ENCODE measurements at regions of chr18 and their contacts with region 1.

Region 1: DNA sequence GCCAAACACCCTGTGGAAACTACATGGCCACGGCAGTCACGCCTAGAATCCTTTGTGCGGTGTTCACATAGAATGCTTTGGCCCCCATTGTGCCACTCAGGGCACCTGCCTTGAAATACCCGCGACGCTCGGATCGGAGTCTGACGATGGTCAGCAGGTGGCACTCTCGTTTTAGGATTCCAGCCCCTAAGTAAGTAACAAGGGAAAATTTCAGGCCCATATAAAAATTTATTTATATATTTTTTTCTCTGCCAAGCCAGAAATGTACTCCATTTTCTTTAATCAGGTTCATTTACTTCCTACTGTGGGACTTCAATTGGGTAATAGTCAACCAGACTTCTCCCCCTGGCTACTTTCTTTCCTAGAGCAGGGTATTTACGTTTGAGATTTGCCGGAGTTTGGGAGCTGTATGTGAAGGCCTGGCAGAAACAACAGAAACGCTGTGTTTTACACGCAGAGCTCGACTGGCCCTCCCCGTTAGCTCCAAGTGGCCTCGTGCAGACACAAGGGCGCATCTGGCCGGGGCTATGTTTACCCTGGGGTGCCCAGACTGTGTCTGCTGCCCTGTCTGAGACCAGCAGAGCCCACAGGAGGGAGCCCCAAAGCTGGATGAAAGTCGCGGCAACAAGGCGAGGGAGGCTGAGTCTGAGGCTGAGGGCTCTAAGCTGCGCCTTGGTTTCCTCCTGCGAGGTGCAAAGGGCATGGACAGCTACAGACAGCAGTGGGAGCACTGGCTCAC is 41.6 kb downstream of the LRRC30 start:
- DNase-seq: peak; percentile 68
- H3K4me3 Mint-ChIP-seq: peak overlapping the region; percentile 55
- H3K27ac Mint-ChIP-seq: no peak overlapping the region
- H3K4me1 Mint-ChIP-seq: peaks cover 17% of the 10 kb centered on the region
- H3K27me3 Mint-ChIP-seq: no peaks in the 10 kb centered on the region
- CTCF ChIP-seq: peak; percentile 66

Region 2: DNA sequence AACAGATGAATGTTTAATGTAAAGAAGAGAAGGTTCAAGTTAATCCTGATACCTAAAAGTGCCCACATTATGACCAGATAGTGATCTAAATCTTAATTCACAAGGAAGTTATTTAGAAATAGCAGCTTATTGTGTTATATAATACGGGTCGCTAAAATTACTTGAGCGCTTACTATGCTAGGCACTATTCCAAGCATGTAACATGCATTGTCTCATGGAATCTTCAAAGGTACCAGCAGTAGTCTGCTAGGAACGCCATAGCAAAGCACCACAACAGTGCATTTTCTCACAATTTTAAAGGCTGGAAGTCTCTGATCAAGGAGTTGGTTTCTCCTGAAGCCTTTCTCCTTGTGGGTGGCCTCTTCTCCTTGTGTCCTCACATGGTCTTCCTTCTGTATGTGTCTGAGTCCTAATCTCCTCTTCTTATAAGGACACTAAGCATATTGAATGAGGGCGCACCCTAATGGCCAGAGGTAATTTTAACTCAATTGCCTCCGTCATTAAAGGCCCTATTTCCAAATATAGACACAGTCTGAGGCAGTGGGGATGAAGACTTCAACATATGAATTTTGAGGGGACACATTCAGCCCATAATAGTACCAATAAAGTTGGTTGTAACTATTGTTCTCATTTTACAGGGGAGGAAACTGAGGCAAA is 76.8 kb after region 1 on chr18:
- CTCF ChIA-PET with region 1: no interaction called
- intact Hi-C with region 1: loop called (anchors 2 kb)
- DNase-seq: no peak
- H3K4me3 Mint-ChIP-seq: no peak overlapping the region
- H3K27ac Mint-ChIP-seq: no peak overlapping the region
- H3K4me1 Mint-ChIP-seq: no peaks in the 10 kb centered on the region
- H3K27me3 Mint-ChIP-seq: peaks cover 8% of the 10 kb centered on the region
- CTCF ChIP-seq: no peak

Region 3: GRCh38 chr18:7488571-7488970 is 216.1 kb after region 1 on chr18:
- CTCF ChIA-PET with region 1: interaction called, 12 read pairs
- intact Hi-C with region 1: no loop called
- DNase-seq: peak; percentile 62
- H3K4me3 Mint-ChIP-seq: peak overlapping the region; percentile 27
- H3K27ac Mint-ChIP-seq: peak overlapping the region; percentile 66
- H3K4me1 Mint-ChIP-seq: peaks cover 41% of the 10 kb centered on the region
- H3K27me3 Mint-ChIP-seq: no peaks in the 10 kb centered on the region
- CTCF ChIP-seq: peak; percentile 27

Region 4: DNA sequence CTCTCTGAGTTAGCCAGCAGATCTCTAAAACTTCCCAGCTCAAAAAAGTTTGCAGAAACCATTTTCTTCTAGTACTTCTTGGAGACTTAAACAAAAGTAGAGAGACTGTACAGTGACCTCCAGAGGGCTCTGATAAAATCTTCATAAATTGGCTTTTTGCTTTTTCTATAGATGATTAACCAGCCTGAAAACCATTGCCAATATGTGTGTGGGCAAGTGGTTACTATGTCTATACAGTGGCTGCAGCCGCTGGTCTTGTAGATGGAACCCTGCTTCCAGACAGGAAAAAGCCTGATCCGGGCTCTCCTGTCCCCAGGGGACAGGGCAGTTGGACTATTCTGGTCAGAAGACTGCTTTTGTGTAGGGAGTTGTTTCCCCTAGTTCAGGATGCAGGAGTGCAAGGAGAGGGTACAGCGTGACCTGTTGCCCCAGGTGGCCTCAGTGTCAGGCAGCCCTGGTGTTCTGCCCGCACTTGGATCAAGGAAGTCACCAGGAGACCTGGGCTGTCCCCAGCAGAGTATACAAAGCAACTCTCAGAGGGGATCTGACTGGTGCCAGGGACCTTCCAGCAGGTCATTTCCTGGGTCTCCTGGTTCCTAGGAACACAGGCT is 287.3 kb after region 1 on chr18:
- CTCF ChIA-PET with region 1: no interaction called
- intact Hi-C with region 1: no loop called
- DNase-seq: peak; percentile 13
- H3K4me3 Mint-ChIP-seq: no peak overlapping the region
- H3K27ac Mint-ChIP-seq: no peak overlapping the region
- H3K4me1 Mint-ChIP-seq: peaks cover 22% of the 10 kb centered on the region
- H3K27me3 Mint-ChIP-seq: no peaks in the 10 kb centered on the region
- CTCF ChIP-seq: no peak

Region 5: GRCh38 chr18:7626922-7627440 is 354.5 kb after region 1 on chr18:
- CTCF ChIA-PET with region 1: interaction called, 9 read pairs
- intact Hi-C with region 1: loop called (anchors 5 kb)
- DNase-seq: peak; percentile 72
- H3K4me3 Mint-ChIP-seq: peak overlapping the region; percentile 15
- H3K27ac Mint-ChIP-seq: peak overlapping the region; percentile 16
- H3K4me1 Mint-ChIP-seq: peaks cover 19% of the 10 kb centered on the region
- H3K27me3 Mint-ChIP-seq: no peaks in the 10 kb centered on the region
- CTCF ChIP-seq: peak; percentile 30

Region 6: GRCh38 chr18:8389391-8390340 is 1117.2 kb after region 1 on chr18:
- CTCF ChIA-PET with region 1: no interaction called
- intact Hi-C with region 1: loop called (anchors 5 kb)
- DNase-seq: peak; percentile 80
- H3K4me3 Mint-ChIP-seq: no peak overlapping the region
- H3K27ac Mint-ChIP-seq: no peak overlapping the region
- H3K4me1 Mint-ChIP-seq: no peaks in the 10 kb centered on the region
- H3K27me3 Mint-ChIP-seq: no peaks in the 10 kb centered on the region
- CTCF ChIP-seq: peak; percentile 88